ENCODE measurements at regions of chr6 and their contacts with region 1.

Region 1: DNA sequence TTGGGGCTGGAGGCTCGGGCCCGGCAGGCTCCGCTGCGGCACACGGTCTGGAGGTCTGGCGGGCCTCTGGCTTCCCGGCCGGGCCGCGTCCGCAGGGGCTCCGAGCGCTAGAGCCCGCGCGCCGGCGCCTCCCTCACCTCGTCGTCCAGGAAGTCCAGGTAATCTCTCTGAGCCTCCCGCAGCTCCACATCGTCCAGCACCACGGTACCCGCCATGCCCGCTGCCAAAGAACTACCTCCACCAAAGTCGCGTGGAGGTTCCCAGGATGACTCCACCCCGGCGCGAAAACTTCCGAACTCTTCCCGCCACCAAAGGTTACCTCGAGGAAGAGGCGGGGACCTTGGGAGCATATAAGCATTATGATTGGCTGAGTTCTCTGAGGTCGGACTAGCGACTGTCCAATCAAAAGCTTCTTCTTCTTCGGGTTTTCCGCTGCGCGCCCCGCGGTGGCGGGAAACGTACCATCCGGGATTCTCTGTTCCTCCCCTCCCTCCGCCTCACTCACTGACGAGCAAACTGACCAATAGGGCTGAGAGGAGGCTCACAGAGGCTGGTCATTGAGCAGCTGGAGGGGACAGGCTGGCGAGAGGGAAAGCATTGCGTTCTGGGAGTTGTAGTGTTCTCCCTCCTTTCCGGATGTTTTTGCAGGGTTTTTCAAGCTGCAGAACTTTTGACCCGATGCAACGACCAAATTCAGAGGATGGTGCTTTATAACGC is at the start of gene MCM3:
- DNase-seq: peak; percentile 97
- ATAC-seq: peak; percentile 100
- total RNA-seq, gene MCM3: 27.4 TPM

Region 2: DNA sequence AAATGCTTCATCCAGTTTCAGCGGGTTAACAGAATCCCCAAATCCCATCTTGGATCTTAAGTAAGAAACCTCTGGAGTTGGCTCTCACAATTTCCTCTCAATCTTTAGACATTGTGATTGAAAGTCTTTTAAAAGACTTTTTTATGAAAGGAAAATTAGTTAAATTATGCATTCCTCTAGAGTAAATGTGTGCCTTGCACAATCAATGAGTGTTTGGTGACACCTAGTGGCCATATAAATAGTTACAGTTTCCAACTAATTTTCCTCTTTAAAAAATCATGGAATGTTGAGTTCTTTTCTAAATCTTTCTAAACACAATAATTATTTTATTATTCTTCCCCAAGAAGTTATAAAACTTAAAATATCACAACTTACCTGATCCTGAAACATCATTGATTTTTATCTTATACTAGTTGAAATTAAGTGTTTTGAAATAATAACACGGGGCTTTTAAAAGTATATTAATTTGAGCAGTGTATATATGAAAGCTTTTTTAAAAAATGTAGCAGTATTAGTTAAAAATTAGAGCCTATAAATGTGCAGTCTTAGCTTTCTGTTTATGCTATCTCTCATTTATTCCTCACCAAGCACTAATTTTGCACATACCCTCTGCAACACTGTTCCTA is 263.6 kb before region 1 on chr6:
- intact Hi-C with region 1: no loop called
- DNase-seq: no peak
- ATAC-seq: no peak

Region 3: DNA sequence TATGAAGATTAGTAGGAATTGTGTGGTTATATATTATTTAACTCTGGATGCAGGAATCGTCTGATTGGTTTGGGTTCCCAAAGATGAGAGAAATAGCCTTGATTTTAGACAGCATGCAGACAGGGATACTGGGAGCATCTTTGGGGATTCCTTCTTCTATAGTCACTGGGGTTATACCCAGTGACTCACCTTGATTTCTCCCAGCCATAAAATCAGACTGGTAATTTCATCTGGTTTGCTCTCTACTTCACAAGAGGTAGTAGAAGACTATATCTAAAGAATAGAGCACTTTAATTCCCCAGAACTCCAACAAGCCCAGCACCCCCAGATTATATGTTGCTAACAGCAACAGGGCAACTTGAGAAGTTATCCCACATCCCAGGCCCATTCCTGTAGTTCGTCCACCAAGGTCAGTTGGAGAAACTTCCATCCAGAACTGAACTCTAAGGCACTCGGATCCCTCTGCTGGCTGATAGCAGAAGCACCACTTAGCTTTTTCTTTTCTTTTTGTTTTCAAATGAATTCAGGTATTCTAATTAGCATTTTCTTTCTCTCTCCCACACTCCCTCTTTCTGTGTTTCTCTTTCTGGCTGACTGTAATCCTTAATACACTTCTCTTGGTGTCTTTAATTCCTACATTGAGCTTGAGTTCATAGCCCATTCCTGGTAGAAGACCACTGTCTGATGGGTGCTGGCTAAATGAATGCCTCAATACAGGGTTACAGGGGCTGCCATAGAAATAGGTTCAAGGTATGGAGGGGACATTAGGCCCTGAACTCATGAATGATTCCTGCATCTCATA is 115.1 kb after region 1 on chr6:
- intact Hi-C with region 1: loop called (anchors 5 kb)
- DNase-seq: no peak
- ATAC-seq: peak; percentile 83

Region 4: DNA sequence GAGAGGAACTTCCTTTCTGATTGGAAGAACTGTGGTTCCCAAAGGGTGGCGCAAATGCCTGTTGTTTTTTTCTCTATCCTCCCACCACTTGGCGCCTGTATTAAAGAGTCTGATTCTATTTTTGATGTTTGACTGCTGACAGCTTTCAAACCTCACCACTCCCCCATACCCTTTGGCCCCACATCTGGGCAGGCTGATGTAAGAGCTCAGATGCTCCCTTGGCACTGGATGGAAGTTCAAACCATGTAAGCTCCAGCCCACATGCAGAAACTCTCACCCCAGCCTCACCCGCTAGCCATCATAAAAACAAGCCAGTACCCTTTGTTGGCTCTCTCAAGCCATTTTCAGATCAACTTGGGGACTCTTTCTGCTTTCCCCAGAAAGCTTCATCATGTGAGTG is 366.3 kb after region 1 on chr6:
- intact Hi-C with region 1: no loop called
- DNase-seq: no peak
- ATAC-seq: no peak

Measured in sciatic nerve (tissue), 2 donors.